ENCODE measurements at regions of chr3 and their contacts with region 1.

Region 1: GRCh38 chr3:138174421-138175122 is at the start of gene DBR1:
- DNase-seq: peak; percentile 91
- H3K4me3 Mint-ChIP-seq: peak within 1 kb of the TSS; percentile 91
- H3K27ac Mint-ChIP-seq: peak within 1 kb of the TSS; percentile 82
- H3K4me1 Mint-ChIP-seq: peaks cover 19% of the 10 kb centered on the region
- H3K27me3 Mint-ChIP-seq: no peaks in the 10 kb centered on the region
- CTCF ChIP-seq: no peak
- total RNA-seq, gene DBR1: 30.8 and 32.8 TPM in 2 replicates

Region 2: DNA sequence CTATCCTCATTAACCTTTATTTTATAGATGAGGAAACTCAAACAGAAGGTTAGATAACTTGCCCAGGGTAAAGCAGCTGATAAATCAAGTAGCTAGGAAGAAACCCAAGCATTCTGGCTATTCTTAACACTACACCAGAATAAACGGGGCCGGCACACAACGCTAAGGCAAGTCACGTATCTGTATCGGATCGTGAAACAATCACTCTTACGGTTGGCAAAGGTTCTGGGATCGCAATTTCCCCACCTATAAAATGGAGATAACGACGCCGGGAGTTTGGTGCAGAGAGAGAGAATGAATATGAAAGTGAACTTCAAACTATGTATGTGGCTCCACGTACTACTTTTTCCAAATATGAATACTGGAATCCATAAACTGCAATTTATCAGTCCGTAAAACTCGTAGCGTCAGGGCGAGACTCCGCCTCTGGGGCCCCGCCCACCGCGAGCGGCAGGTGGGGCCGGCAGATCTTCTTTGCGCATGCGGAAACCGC is 12.3 kb after region 1 on chr3:
- CTCF ChIA-PET with region 1: interaction called, 20 read pairs
- intact Hi-C with region 1: no loop called
- DNase-seq: peak; percentile 96
- H3K4me3 Mint-ChIP-seq: peak overlapping the region; percentile 92
- H3K27ac Mint-ChIP-seq: peak overlapping the region; percentile 98
- H3K4me1 Mint-ChIP-seq: peaks cover 32% of the 10 kb centered on the region
- H3K27me3 Mint-ChIP-seq: no peaks in the 10 kb centered on the region
- CTCF ChIP-seq: no peak